Cardiac septum (tissue), 1 donor: ENCODE measurements at regions of chr4 and their contacts with region 1.

Region 1: DNA sequence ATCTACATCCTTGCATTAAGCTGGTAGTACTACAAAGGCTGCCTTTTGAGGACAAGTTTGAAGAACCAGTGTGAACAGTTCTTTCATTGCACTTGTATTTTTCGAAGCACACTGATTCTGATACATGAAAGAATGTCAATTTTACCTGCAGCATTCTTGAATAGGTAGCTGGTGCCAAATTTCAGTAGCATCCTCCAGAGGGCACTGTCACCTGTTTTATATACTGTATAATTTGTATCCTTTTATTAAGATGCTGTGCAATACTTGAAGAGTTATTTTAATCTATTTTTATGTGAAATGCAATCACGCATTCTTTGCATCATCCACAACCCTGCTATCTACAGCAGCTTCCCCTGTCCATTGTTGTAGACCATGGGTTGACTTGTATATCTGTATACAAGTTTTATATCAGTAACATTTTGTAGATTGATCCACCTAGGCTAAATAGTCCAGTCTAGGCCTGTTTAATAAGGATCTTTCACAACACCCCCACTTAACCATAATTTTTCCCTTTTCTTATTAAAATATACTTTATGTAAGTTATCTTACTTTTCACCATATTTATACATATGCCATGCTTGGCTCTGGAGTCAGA is 325.7 kb downstream of the PCDH7 start:
- DNase-seq: no peak

Region 2: DNA sequence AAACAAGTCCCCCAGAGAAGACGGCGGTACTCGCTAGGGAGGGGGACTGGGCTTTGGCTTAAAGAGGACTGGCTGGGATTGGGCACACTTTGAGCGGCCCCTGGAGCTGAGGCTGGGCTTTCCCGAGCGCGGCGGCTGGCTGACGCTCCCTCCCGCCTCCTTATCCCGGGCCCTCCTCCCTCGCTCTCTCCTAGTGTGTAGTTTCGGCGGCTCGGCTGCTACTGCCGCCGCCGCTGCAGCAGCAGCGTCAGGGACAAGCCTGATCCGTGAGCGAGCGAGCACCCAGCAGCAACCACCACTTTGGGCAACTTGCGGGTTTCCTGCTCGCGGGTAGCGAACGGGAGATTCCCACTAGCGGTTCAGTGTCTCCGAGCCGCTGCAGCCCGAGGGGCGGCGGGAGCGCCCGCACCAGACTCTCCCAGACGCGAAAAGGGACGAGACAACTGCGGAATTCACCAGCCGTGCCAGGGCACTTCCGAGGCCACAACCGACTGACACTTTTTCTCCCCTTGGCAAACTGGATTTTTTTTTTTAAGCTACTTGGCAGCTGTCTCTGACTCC is 326.3 kb before region 1 on chr4:
- intact Hi-C with region 1: loop called (anchors 5 kb)
- DNase-seq: peak; percentile 77

Region 3: GRCh38 chr4:30863021-30863420 is 182.8 kb before region 1 on chr4:
- intact Hi-C with region 1: no loop called
- DNase-seq: no peak

Region 4: DNA sequence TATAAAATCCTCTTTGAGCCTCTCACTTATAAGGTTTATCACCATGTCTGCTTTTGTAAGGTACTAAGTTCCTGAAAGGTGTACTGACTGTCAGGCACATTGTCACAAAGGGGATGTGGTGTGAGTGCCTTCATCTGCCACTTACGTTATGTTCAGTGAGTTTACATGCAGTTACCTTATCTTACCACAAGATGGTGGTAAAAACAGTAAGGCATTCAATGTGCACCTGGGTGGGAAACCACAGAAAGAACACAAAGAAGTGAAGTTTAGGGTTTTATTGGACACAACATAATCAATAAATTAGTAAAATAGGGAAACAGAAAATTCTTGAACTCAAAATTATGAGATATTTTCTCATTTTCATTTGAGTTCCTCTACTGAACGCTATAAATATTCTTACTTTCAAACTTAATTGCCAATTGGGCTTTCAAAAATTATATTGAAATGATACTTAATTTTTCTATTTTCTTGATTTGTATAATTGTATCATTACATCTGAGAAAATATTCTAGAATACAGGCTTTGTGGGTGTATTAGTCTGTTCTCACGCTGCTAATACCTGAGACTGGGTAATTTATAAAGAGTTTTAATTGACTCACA is 325.1 kb after region 1 on chr4:
- intact Hi-C with region 1: loop called (anchors 10 kb)
- DNase-seq: no peak